Activated CD4-positive, alpha-beta T cell treated with anti-CD3 and anti-CD28 coated beads, Interleukin-2, amount 10 ng/mL, durations not matched to agents 7 days and 5 days (primary cell): ENCODE measurements at regions of chr12 and their contacts with region 1.

Region 1: GRCh38 chr12:54032627-54033100 is at the start of gene HOXC5:
- DNase-seq: peak; percentile 67
- H3K4me3 Mint-ChIP-seq: peak within 1 kb of the TSS; percentile 32
- H3K27ac Mint-ChIP-seq: peak within 1 kb of the TSS; percentile 28
- H3K4me1 Mint-ChIP-seq: peaks cover 27% of the 10 kb centered on the region
- H3K27me3 Mint-ChIP-seq: peaks cover 86% of the 10 kb centered on the region
- total RNA-seq, gene HOXC5: not detected

Region 2: GRCh38 chr12:54005853-54006686 is 26.6 kb before region 1 on chr12:
- CTCF ChIA-PET with region 1: interaction called, 16 read pairs
- POLR2A ChIA-PET with region 1: no interaction called
- DNase-seq: peak; percentile 84
- H3K4me3 Mint-ChIP-seq: peak overlapping the region; percentile 67
- H3K27ac Mint-ChIP-seq: no peak overlapping the region
- H3K4me1 Mint-ChIP-seq: peaks cover 25% of the 10 kb centered on the region
- H3K27me3 Mint-ChIP-seq: peaks cover 94% of the 10 kb centered on the region

Region 3: GRCh38 chr12:54191550-54192022 is 158.9 kb after region 1 on chr12:
- CTCF ChIA-PET with region 1: interaction called, 28 read pairs
- POLR2A ChIA-PET with region 1: interaction called, 7 read pairs
- DNase-seq: peak; percentile 84
- H3K4me3 Mint-ChIP-seq: no peak overlapping the region
- H3K27ac Mint-ChIP-seq: no peak overlapping the region
- H3K4me1 Mint-ChIP-seq: peaks cover 25% of the 10 kb centered on the region
- H3K27me3 Mint-ChIP-seq: peaks cover 53% of the 10 kb centered on the region

Region 4: DNA sequence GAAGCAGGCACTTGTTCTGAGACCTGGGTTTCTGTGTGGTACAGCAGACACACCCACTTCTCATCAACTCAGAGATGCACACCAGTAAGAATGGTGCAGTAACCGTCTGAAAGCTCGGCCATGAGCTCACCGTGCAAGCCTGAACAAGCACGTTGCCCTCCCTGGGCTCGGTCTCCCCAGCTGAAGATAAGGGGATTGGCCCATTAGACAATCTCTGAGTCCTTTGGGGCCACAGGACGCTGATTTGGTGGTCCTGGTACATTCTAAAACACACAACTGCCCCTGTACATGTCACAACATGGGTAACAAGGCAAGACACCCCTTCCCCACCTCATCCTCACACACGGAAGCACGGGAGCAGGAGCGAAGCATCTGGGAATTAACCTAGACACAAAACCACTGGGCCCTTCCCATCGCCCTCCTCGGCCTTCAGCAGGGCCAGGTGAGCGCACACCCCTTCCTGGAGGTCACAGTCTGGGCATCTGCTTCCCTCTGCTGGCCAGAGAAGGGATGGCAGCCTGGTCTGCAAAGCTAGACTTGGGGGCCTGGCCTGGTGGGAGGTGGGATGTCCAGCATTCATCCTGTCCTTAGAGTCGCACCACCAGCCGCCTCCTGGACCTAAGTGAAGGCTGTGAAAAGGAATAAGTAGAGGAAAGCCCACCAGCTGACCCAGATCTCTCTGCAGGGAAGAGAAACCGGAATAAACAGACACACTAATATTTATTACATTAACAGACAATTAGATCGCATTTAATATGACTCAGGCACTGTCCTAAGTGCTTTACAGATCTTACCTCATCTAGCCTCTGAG is 175.0 kb after region 1 on chr12:
- CTCF ChIA-PET with region 1: interaction called, 29 read pairs
- POLR2A ChIA-PET with region 1: no interaction called
- DNase-seq: peak; percentile 81
- H3K4me3 Mint-ChIP-seq: no peak overlapping the region
- H3K27ac Mint-ChIP-seq: peak overlapping the region; percentile 36
- H3K4me1 Mint-ChIP-seq: peaks cover 8% of the 10 kb centered on the region
- H3K27me3 Mint-ChIP-seq: peaks cover 39% of the 10 kb centered on the region